ENCODE measurements at regions of chr15 and their contacts with region 1.

Region 1: GRCh38 chr15:95503640-95504227 is 826.8 kb upstream of the NR2F2 start:
- DNase-seq: peak; percentile 69
- ATAC-seq: peak; percentile 95
- H3K4me3 ChIP-seq: no peak overlapping the region
- H3K27ac ChIP-seq: no peak overlapping the region
- H3K4me1 ChIP-seq: no peaks in the 10 kb centered on the region
- H3K27me3 ChIP-seq: no peaks in the 10 kb centered on the region
- CTCF ChIP-seq: no peak
- EP300 ChIP-seq: peak; percentile 97 to 98
- POLR2A ChIP-seq: no peak
- RAD21 ChIP-seq: no peak

Region 2: GRCh38 chr15:95284933-95285421 is 218.8 kb before region 1 on chr15:
- CTCF ChIA-PET with region 1: no interaction called
- POLR2A ChIA-PET with region 1: interaction called, 5 read pairs
- RAD21 ChIA-PET with region 1: interaction called, 12 read pairs
- SMC1A ChIA-PET with region 1: interaction called, 5 read pairs
- in situ Hi-C with region 1: no loop called
- intact Hi-C with region 1: no loop called
- DNase-seq: no peak
- ATAC-seq: peak; percentile 68
- H3K4me3 ChIP-seq: no peak overlapping the region
- H3K27ac ChIP-seq: no peak overlapping the region
- H3K4me1 ChIP-seq: peaks cover 4% of the 10 kb centered on the region; the same call in 1 of the 2 replicates
- H3K27me3 ChIP-seq: no peaks in the 10 kb centered on the region
- CTCF ChIP-seq: peak in 1 of 3 experiments; percentile 4; a peak in 1 of 6 replicates
- EP300 ChIP-seq: peak in 1 of 2 experiments; percentile 45; a peak in 1 of 4 replicates
- POLR2A ChIP-seq: no peak
- RAD21 ChIP-seq: 0 out of 2 replicates have a peak, but pooled peaks have one; percentile 18

Region 3: GRCh38 chr15:95304151-95304946 is 199.4 kb before region 1 on chr15:
- CTCF ChIA-PET with region 1: no interaction called
- POLR2A ChIA-PET with region 1: no interaction called
- RAD21 ChIA-PET with region 1: no interaction called
- SMC1A ChIA-PET with region 1: no interaction called
- in situ Hi-C with region 1: no loop called
- intact Hi-C with region 1: loop called (anchors 1 kb)
- DNase-seq: no peak
- ATAC-seq: peak; percentile 67
- H3K4me3 ChIP-seq: no peak overlapping the region
- H3K27ac ChIP-seq: no peak overlapping the region
- H3K4me1 ChIP-seq: no peaks in the 10 kb centered on the region
- H3K27me3 ChIP-seq: no peaks in the 10 kb centered on the region
- CTCF ChIP-seq: no peak
- EP300 ChIP-seq: no peak
- POLR2A ChIP-seq: no peak
- RAD21 ChIP-seq: no peak

Region 4: DNA sequence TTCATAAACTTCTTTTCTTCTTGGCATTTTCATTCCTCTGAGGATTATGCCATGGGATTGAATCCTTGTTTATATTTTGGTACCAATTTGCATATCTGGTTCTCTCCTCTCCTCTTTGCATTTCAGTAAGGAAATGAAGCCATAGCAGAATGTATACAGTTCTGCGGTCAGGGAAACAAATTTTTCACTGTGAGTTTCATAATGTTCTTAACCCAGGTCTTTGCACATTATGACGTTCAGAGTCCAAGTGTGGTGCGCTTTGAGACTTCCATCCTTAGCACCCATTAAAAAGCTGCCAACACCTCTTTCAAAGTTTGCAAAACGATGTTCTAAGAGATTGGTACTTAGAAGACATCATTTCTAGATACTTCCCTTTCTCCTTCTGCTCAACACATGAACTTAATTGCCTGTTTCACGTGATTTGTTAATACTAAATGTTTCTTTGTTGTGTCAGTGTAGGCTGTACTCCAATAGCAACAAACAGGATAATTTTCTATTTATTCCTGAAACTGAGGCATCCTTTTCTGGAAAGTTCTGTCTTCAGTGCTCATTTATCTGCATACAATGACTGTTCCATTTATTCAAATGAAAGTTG is 126.4 kb before region 1 on chr15:
- CTCF ChIA-PET with region 1: no interaction called
- POLR2A ChIA-PET with region 1: no interaction called
- RAD21 ChIA-PET with region 1: no interaction called
- SMC1A ChIA-PET with region 1: no interaction called
- in situ Hi-C with region 1: no loop called
- intact Hi-C with region 1: no loop called
- DNase-seq: no peak
- ATAC-seq: no peak
- H3K4me3 ChIP-seq: no peak overlapping the region
- H3K27ac ChIP-seq: no peak overlapping the region
- H3K4me1 ChIP-seq: no peaks in the 10 kb centered on the region
- H3K27me3 ChIP-seq: no peaks in the 10 kb centered on the region
- CTCF ChIP-seq: no peak
- EP300 ChIP-seq: no peak
- POLR2A ChIP-seq: no peak
- RAD21 ChIP-seq: no peak

Region 5: DNA sequence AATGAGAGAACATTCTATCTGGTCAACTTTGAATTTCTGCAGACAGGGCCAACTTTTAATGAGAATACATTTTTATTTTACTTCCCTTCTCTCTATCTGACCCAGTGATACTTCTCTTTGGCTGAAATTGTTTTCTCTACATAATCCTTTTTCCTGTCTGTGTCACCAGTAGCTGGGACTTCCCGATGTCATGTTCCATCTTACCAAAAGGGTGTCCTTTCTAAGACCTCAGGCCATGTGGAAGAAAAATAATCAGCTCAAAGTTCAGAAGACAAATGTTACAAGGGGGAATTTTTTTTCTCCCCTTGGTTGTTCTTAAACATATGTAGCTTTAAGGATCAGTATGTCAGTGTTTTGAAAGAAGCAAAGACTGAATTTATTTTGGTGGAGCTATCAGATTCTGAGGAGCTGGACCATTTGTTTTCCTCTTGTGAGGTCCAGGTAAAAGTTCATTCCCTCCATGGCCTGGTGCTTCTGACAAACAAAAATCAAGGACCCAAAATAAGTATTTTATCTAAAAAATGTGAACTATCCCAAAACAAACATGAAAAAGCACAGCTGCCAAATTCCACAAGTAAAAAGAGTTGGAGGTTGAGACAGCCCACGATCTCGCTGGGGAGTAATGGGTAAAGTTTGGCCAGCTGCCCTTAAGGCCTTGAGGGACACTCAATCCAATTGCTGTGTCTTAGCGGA is 32.6 kb before region 1 on chr15:
- CTCF ChIA-PET with region 1: interaction called, 5 read pairs
- POLR2A ChIA-PET with region 1: no interaction called
- RAD21 ChIA-PET with region 1: interaction called, 5 read pairs
- SMC1A ChIA-PET with region 1: interaction called, 10 read pairs
- in situ Hi-C with region 1: no loop called
- intact Hi-C with region 1: no loop called
- DNase-seq: no peak
- ATAC-seq: peak; percentile 56
- H3K4me3 ChIP-seq: no peak overlapping the region
- H3K27ac ChIP-seq: no peak overlapping the region
- H3K4me1 ChIP-seq: no peaks in the 10 kb centered on the region
- H3K27me3 ChIP-seq: no peaks in the 10 kb centered on the region
- CTCF ChIP-seq: no peak
- EP300 ChIP-seq: no peak
- POLR2A ChIP-seq: no peak
- RAD21 ChIP-seq: no peak

Region 6: DNA sequence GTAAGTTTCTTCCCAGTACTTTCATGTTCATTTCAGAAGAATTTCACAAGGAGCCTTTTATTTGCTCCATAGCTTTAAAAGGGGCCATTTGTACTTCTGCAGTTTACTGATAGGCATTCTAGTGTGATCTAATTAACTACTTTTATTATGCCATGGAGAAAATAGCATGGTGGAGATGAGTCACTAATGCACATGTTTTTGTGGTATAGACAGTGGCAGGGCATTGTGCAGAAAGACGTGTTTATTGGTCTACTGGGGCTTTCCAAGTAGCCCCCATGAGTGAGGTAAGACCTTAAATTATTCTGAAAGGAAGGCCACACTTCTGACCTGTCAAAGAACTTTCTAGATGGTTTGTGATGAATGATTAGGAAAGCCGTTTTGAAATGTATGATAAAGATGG is 16.8 kb after region 1 on chr15:
- CTCF ChIA-PET with region 1: no interaction called
- POLR2A ChIA-PET with region 1: interaction called, 3 read pairs
- RAD21 ChIA-PET with region 1: interaction called, 3 read pairs
- SMC1A ChIA-PET with region 1: interaction called, 7 read pairs
- in situ Hi-C with region 1: no loop called
- intact Hi-C with region 1: loop called (anchors 1 kb)
- DNase-seq: peak; percentile 15
- ATAC-seq: peak; percentile 96
- H3K4me3 ChIP-seq: no peak overlapping the region
- H3K27ac ChIP-seq: no peak overlapping the region
- H3K4me1 ChIP-seq: no peaks in the 10 kb centered on the region
- H3K27me3 ChIP-seq: no peaks in the 10 kb centered on the region
- CTCF ChIP-seq: no peak
- EP300 ChIP-seq: peak; percentile 89 to 91
- POLR2A ChIP-seq: no peak
- RAD21 ChIP-seq: no peak

Measured in GM12878 (cell line).